ENCODE measurements at regions of chr5 and their contacts with region 1.

Region 1: GRCh38 chr5:73519531-73520283 is 21.5 kb downstream of the BTF3 start:
- DNase-seq: peak; percentile 85
- CTCF ChIP-seq: peak; percentile 85

Region 2: DNA sequence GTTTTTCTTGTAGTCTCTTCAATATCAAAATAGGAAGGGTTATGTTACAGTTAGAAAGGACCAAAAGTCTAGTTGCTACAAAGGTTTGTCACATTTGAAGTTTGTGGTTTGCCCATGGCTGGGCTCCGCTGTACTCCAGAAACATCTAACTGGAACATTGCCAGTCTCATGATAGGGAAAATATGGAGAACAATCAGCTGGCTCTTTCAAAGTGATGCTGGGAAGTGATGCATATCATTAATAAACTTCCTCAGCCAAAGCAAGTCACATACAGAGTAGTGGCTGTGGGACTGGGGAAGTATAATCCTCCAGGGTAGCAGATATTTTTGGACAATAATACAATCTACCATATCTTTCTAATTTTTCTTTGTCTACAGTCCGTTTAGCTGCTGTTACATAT is 12.6 kb before region 1 on chr5:
- CTCF ChIA-PET with region 1: interaction called, 17 read pairs
- POLR2A ChIA-PET with region 1: interaction called, 3 read pairs
- DNase-seq: no peak
- CTCF ChIP-seq: no peak

Region 3: GRCh38 chr5:73534971-73535370 is 15.3 kb after region 1 on chr5:
- CTCF ChIA-PET with region 1: interaction called, 86 read pairs
- POLR2A ChIA-PET with region 1: no interaction called
- DNase-seq: no peak
- CTCF ChIP-seq: no peak

Measured in GM10248 (cell line).